ENCODE measurements at regions of chr10 and their contacts with region 1.

Region 1: DNA sequence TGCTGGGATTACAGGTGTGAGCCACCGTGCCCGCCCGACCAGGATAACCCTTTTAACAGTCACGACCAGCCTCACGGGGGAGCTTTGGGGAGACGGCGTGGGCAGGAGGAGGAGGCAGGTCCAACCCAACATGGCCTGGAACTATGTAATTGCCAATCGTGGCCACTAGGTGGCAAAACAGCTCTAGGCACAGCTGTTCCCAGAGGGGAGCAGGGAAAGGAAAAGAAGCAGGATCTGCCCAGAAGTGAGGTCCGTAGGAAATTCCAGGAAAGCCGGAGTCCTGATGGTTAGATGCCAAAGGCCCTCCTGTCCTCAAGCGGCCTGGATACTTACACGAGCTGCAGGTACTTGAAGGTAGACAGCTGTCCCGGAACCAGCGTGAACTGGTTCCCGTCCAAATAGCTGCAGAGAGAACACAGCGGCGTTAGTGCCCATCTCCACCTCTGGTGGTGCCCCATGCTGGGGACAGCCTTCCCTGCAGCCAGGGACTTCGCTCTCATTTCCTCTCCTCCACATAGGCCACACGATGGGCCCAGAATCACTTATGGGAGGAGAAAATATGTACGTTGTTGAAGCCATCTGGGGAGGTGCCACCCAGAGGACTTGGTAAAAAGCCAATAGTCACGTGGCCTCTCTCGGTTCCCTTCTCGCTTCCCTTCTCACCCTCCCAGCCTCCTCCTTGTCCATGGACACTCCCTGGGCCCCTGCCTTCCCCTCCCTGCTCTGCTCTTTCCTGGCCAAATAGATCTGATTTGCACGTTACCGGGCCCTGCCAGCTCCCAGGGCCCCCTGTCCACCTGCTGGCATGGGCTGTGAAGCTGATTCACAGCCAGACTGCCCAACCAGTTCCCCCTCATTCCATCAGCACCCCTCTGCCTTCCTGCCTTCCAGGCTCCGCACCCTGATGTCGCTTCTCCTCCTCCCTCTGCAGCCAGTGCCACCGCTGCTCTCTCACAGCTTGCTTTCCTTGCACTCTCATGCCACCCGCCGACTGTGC is 148.1 kb downstream of the SLIT1 start:
- DNase-seq: peak; percentile 75 to 79
- H3K4me3 ChIP-seq: peak overlapping the region; percentile 52; the same call in 1 of the 2 replicates
- H3K27ac ChIP-seq: 0 out of 2 replicates have a peak overlapping the region, but pooled peaks have one; percentile 41
- H3K4me1 ChIP-seq: peaks cover 13% of the 10 kb centered on the region
- H3K27me3 ChIP-seq: no peaks in the 10 kb centered on the region
- CTCF ChIP-seq: peak; percentile 85

Region 2: DNA sequence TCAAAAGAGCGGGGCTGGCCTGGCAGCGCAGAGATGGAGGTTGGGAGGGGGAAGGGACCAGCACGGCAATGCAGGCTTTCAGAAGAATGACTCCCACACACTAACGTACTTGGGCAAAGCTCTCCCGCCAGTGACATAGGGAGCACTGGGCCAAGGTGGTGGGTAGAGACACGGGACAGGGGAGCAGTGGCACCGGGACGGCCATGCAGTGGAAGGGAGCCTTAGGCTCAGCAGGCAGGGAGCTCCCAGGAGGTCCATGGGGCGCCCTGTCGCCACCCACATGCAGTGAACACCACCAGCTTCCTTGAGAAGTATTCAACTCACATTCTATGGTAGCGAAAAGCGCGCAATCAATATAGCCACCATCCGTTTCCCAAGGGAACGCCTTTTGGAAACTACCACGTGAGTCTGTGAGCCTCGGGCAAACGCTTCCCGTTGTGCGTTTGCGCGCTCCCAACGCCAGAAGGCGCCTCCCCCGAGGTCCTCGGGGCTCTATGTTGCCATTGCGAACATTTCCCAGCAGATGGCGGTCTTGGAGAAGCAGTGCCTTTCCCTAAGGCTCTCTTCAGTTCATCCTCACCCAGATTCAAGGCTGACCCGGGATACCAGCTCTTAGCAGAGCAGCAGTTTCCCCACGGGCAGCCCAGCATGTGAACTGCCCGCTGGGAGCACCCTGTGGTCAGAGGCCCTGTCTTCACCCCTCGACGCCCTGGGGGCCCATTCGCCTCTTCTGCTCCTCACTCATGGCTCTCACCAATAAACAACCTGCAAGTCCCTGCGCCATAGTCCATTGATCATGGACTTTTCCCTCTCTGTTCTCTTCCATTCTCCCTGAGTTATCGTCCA is 662.5 kb before region 1 on chr10:
- CTCF ChIA-PET with region 1: no interaction called
- POLR2A ChIA-PET with region 1: no interaction called
- intact Hi-C with region 1: loop called (anchors 5 kb)
- DNase-seq: peak; percentile 66 to 80
- H3K4me3 ChIP-seq: peak overlapping the region; percentile 45; the same call in 1 of the 2 replicates
- H3K27ac ChIP-seq: no peak overlapping the region
- H3K4me1 ChIP-seq: no peaks in the 10 kb centered on the region
- H3K27me3 ChIP-seq: no peaks in the 10 kb centered on the region
- CTCF ChIP-seq: peak; percentile 85

Region 3: DNA sequence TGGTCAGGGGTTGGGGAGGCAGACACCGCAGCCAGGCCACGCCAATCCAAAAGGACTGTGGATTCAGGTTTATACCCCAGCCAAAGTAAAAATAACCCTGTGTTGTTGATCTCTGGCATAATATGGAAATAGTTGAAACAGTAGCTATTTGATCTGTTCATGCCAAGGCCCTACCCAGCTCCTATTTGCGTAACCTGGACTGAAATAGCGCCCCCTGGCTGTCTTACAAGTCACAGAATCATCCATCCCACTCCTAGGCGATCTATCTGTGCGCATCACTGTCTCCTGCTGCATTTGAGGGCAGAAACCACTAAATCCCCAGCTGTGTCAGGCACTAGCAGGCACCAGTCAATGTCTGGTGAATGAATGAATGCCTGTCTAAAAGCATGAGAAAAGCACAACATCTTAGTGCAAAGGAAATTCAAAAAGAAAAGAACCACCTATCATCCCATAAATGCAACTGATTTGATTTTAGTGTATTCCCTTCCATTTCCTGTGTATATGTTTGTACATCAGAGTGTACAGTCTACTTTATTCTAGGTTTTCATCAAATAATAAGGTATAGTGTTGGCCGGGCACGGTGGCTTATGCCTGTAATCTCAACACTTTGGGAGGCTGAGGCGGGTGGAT is 11.9 kb before region 1 on chr10:
- CTCF ChIA-PET with region 1: interaction called, 11 read pairs
- POLR2A ChIA-PET with region 1: no interaction called
- intact Hi-C with region 1: no loop called
- DNase-seq: no peak
- H3K4me3 ChIP-seq: no peak overlapping the region
- H3K27ac ChIP-seq: no peak overlapping the region
- H3K4me1 ChIP-seq: peaks cover 14% of the 10 kb centered on the region
- H3K27me3 ChIP-seq: no peaks in the 10 kb centered on the region
- CTCF ChIP-seq: peak; percentile 56

Region 4: GRCh38 chr10:97117372-97117771 is 79.7 kb after region 1 on chr10:
- CTCF ChIA-PET with region 1: no interaction called
- POLR2A ChIA-PET with region 1: no interaction called
- intact Hi-C with region 1: loop called (anchors 1 kb)
- DNase-seq: peak in 1 of 2 experiments; percentile 11
- H3K4me3 ChIP-seq: no peak overlapping the region
- H3K27ac ChIP-seq: no peak overlapping the region
- H3K4me1 ChIP-seq: no peaks in the 10 kb centered on the region
- H3K27me3 ChIP-seq: peaks cover 43% of the 10 kb centered on the region
- CTCF ChIP-seq: peak; percentile 61

Region 5: DNA sequence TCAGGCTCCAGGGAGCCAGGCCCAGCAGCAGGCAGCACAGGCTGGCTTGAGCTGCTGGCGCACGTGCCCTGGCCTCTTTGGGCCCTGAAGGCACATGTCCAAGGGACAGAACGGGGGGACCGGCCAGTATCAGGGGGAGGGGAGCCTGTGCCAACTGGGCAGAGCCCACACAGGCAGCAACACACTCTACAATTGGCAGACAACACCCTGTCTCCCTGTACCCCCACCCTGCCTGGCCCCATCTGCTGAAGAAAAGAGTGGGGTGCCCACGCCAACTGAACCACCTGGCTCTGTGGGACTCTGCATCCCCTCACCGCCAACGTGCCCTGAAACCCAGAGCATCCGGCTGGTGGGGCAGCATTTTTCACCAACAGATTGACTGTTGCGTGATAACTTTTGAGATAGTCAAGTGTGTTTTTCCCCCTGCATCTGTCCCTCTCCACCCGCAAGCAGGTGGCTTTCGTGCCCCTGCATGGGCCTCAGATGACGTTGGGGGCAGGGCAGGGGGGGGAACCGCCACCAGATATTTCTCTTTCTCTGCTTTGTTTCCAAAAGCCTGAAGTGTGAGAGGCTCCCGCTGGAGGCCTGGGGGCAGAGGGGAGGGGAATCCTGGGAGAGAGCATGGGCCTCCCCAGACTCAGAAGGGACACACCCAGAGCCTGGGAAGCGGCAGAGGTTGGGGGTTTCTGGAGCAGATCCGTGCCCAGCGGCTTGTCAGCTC is 126.3 kb after region 1 on chr10:
- CTCF ChIA-PET with region 1: no interaction called
- POLR2A ChIA-PET with region 1: no interaction called
- intact Hi-C with region 1: no loop called
- DNase-seq: no peak
- H3K4me3 ChIP-seq: no peak overlapping the region
- H3K27ac ChIP-seq: no peak overlapping the region
- H3K4me1 ChIP-seq: no peaks in the 10 kb centered on the region
- H3K27me3 ChIP-seq: 0 out of 2 replicates have a peak, but pooled peaks cover 3% of the 10 kb centered on the region
- CTCF ChIP-seq: no peak

Measured in PC-9 (cell line).